Activated B cell treated with CpG ODN at 0.5 μM for 24 hours (primary cell): ENCODE measurements at regions of chr3 and their contacts with region 1.

Region 1: DNA sequence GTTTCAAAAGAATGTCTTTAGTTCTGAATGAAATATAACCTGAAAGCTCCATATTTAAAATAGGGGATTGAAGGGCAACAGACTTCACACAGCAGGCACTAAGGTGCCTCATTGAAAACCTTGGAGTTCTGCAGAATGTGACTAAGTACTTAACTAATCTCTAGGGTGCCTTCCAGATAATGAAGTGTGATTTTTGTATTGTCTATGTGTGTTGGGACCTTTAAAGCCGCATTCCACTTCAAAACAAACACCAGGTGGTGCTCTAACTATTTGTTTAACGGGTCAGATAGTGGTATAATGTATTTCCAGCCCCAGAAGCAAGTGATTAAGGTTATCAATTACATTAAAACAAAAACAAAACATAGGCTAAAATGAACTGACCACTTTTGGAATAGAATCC is 28.0 kb downstream of the TFG start:
- DNase-seq: no peak
- ATAC-seq: no peak
- H3K4me3 Mint-ChIP-seq: no peak overlapping the region
- H3K27ac Mint-ChIP-seq: no peak overlapping the region
- H3K4me1 Mint-ChIP-seq: no peaks in the 10 kb centered on the region
- H3K27me3 Mint-ChIP-seq: no peaks in the 10 kb centered on the region
- CTCF ChIP-seq: no peak

Region 2: DNA sequence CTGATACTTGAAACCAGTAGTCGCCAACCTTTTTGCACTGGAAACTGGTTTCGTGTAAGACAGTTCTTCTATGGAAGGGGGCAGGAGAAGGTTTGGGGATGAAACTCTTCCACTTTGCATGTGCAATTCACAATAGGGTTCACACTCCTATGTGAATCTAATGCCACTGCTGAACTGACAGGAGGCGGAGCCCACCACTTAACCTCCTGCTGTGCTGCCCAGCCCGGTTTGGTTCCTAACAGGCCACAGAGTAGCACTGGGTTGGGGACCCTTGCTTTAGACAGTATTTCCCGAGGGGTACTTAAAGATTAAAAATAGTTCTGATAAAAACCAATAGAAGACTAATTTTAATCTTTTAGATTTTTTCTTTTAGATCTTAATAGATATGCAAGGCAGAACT is 16.9 kb before region 1 on chr3:
- CTCF ChIA-PET with region 1: no interaction called
- POLR2A ChIA-PET with region 1: no interaction called
- intact Hi-C with region 1: no loop called
- DNase-seq: no peak
- ATAC-seq: no peak
- H3K4me3 Mint-ChIP-seq: no peak overlapping the region
- H3K27ac Mint-ChIP-seq: no peak overlapping the region
- H3K4me1 Mint-ChIP-seq: peaks cover 15% of the 10 kb centered on the region
- H3K27me3 Mint-ChIP-seq: no peaks in the 10 kb centered on the region
- CTCF ChIP-seq: no peak

Region 3: GRCh38 chr3:101635954-101636798 is 898.8 kb after region 1 on chr3:
- CTCF ChIA-PET with region 1: no interaction called
- POLR2A ChIA-PET with region 1: no interaction called
- intact Hi-C with region 1: loop called (anchors 2 kb)
- DNase-seq: peak; percentile 27
- ATAC-seq: peak; percentile 76
- H3K4me3 Mint-ChIP-seq: no peak overlapping the region
- H3K27ac Mint-ChIP-seq: no peak overlapping the region
- H3K4me1 Mint-ChIP-seq: peaks cover 2% of the 10 kb centered on the region
- H3K27me3 Mint-ChIP-seq: no peaks in the 10 kb centered on the region
- CTCF ChIP-seq: no peak